ENCODE measurements at regions of chrX and their contacts with region 1.

Region 1: GRCh38 chrX:51860679-51861078 is 32.7 kb upstream of the MAGED1 start:
- DNase-seq: peak in 4 of 10 donors; percentile 6 to 16 (median 11)

Region 2: DNA sequence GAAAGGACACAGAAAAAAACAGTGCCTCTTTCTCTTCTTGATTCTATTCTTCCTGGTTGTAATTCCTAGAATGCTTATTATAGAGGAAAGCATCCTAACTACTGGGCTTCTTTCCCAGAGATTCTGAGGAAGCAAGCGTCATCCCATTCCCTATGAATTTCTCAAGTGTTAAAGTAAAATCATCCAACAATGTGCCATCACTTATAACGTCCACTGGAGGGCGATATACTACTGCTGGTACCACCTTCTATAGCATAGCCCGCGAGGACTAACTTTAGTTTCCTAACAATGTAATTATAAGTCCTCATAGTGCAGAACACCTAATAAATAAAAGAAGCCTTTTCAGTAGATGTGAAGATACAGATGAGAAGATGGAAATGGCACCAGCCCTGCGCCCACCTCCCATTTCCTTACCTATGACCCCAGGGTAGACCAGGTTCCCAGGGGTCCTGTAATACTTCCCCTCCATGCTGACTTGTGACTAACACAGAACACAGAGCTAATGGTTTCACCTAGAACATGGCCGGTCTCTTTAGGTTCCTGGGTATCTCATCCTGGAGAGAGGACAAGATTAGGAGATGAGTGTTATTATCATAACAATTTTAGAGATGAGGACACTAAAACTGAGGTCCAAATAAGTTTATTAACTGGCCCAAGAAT is 246.2 kb before region 1 on chrX:
- intact Hi-C with region 1: loop called (anchors 2 kb)
- DNase-seq: no peak

Region 3: DNA sequence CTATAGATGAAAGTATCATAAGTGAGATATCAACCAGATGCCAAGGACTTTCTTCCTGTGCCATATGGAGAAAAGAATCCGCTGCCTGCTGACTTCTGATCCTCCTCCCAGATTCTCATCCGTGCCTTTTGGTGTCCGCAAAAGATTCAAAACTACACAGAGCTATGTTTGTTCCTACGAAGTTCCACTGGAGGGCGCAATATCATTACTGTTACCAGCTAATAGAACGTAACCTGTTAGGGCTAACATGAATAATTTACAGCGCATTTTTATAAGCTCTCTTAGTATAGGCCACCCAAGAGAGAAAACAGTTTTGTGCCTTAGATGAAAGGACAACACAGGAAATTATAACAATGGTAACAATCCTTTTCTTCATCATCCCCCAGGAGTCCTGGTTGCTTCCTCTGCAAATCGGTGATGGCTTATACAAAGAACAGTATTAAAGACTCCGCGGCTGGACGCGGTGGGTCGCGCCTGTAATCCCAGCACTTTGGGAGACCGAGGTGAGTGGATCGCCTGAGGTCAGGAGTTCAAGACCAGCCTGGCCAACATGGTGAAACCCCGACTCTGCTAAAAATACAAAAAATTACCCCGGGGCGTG is 219.2 kb before region 1 on chrX:
- intact Hi-C with region 1: loop called (anchors 5 kb)
- DNase-seq: no peak

Measured in posterior cingulate gyrus (tissue), 11 donors.